ENCODE measurements at regions of chr7 and their contacts with region 1.

Region 1: DNA sequence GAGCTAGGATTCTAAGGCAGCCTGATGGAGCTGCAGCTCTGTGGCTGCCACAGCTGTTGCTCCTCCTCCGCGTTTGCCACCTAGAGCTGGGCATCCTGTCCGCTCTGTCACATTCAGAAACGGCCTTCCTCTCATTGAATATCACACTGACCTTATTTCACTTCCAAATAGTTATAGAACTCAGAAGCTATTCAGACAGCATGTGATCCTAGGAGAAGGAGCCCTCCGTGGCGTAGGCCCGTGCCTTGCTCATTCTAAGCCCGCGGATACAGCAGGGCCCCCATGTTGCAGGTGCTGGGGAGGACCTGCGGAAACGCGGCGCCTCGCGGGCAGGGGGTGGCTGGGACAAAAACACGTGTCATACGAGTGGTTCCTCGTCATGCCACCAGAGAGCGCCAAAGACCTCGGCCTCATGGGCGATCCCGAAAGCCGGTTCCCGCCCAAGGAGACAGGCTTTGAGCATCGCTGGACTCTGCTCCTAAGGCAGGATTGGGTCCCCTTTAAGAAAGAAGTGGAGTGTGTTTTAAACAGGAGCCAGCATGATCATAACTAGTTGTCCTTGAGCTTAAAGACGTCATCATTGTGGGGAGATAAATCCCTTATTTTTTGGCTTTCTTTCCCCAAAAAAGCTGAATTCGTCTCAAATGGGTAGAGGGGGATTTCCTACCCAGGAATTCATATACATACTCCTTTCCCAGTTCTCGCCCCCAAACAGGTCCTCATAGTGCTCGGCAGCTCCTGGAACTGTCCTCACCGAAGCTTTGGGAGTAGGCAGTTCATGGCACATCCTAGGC is 17.9 kb upstream of the FIGNL1 start:
- DNase-seq: peak; percentile 50
- H3K4me3 ChIP-seq: no peak overlapping the region
- H3K27ac ChIP-seq: no peak overlapping the region
- H3K4me1 ChIP-seq: no peaks in the 10 kb centered on the region
- H3K27me3 ChIP-seq: no peaks in the 10 kb centered on the region
- CTCF ChIP-seq: peak; percentile 68 to 94

Region 2: GRCh38 chr7:50206453-50207250 is 261.4 kb before region 1 on chr7:
- CTCF ChIA-PET with region 1: no interaction called
- dilution Hi-C with region 1: no loop called
- in situ Hi-C with region 1: no loop called
- intact Hi-C with region 1: loop called (anchors 1 kb)
- DNase-seq: no peak
- H3K4me3 ChIP-seq: no peak overlapping the region
- H3K27ac ChIP-seq: no peak overlapping the region
- H3K4me1 ChIP-seq: no peaks in the 10 kb centered on the region
- H3K27me3 ChIP-seq: peaks cover 2% of the 10 kb centered on the region
- CTCF ChIP-seq: no peak

Region 3: GRCh38 chr7:50418086-50418515 is 49.9 kb before region 1 on chr7:
- CTCF ChIA-PET with region 1: no interaction called
- dilution Hi-C with region 1: no loop called
- in situ Hi-C with region 1: no loop called
- intact Hi-C with region 1: no loop called
- DNase-seq: peak; percentile 71
- H3K4me3 ChIP-seq: no peak overlapping the region
- H3K27ac ChIP-seq: no peak overlapping the region
- H3K4me1 ChIP-seq: no peaks in the 10 kb centered on the region
- H3K27me3 ChIP-seq: no peaks in the 10 kb centered on the region
- CTCF ChIP-seq: peak; percentile 97 to 98

Region 4: GRCh38 chr7:50588937-50589336 is 120.9 kb after region 1 on chr7:
- CTCF ChIA-PET with region 1: no interaction called
- dilution Hi-C with region 1: no loop called
- in situ Hi-C with region 1: no loop called
- intact Hi-C with region 1: loop called (anchors 1 kb)
- DNase-seq: no peak
- H3K4me3 ChIP-seq: no peak overlapping the region
- H3K27ac ChIP-seq: no peak overlapping the region
- H3K4me1 ChIP-seq: peaks cover 13% of the 10 kb centered on the region
- H3K27me3 ChIP-seq: no peaks in the 10 kb centered on the region
- CTCF ChIP-seq: no peak

Region 5: GRCh38 chr7:50632561-50633413 is 164.8 kb after region 1 on chr7:
- CTCF ChIA-PET with region 1: interaction called, 5 read pairs
- dilution Hi-C with region 1: no loop called
- in situ Hi-C with region 1: no loop called
- intact Hi-C with region 1: loop called (anchors 1 kb)
- DNase-seq: peak; percentile 70
- H3K4me3 ChIP-seq: no peak overlapping the region
- H3K27ac ChIP-seq: no peak overlapping the region
- H3K4me1 ChIP-seq: peaks cover 3% of the 10 kb centered on the region
- H3K27me3 ChIP-seq: no peaks in the 10 kb centered on the region
- CTCF ChIP-seq: peak; percentile 92 to 94

Region 6: GRCh38 chr7:50793115-50793946 is 325.3 kb after region 1 on chr7:
- CTCF ChIA-PET with region 1: no interaction called
- dilution Hi-C with region 1: no loop called
- in situ Hi-C with region 1: no loop called
- intact Hi-C with region 1: loop called (anchors 10 kb)
- DNase-seq: no peak
- H3K4me3 ChIP-seq: peak overlapping the region in 2 of 3 experiments; percentile 37 to 53
- H3K27ac ChIP-seq: no peak overlapping the region
- H3K4me1 ChIP-seq: no peaks in the 10 kb centered on the region
- H3K27me3 ChIP-seq: peaks cover 13% of the 10 kb centered on the region
- CTCF ChIP-seq: no peak

Region 7: DNA sequence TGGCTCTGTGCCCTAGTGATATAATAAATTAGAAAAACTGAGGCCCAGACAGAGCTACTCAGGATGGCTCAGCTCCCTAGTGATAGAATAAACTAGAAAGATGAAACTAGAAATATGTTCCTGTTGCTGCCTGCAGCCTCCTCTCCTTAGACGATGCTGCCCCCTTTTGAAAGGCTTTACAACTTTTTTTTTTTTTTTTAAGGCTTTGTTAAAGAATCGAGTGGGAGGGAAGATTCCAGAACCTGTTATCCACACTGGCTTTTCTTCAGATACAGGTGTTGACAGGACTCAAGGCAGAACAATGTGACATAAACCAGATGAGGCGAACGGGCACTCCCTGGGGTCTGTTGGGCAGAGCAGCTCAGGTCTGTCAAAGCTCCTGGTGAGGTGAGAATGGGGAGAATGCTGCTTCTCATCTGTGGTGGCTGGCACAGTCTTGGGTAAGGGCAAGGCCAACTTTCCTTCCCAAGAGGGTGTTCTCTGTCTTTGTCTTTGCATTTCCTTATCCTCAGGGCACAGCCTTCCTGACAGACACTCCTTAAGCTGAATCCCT is 673.5 kb after region 1 on chr7:
- CTCF ChIA-PET with region 1: no interaction called
- dilution Hi-C with region 1: no loop called
- in situ Hi-C with region 1: loop called (anchors 10 to 25 kb)
- intact Hi-C with region 1: loop called (anchors 1 kb)
- DNase-seq: peak; percentile 48
- H3K4me3 ChIP-seq: no peak overlapping the region
- H3K27ac ChIP-seq: no peak overlapping the region
- H3K4me1 ChIP-seq: peaks cover 36% of the 10 kb centered on the region
- H3K27me3 ChIP-seq: no peaks in the 10 kb centered on the region
- CTCF ChIP-seq: peak; percentile 63 to 75

Region 8: DNA sequence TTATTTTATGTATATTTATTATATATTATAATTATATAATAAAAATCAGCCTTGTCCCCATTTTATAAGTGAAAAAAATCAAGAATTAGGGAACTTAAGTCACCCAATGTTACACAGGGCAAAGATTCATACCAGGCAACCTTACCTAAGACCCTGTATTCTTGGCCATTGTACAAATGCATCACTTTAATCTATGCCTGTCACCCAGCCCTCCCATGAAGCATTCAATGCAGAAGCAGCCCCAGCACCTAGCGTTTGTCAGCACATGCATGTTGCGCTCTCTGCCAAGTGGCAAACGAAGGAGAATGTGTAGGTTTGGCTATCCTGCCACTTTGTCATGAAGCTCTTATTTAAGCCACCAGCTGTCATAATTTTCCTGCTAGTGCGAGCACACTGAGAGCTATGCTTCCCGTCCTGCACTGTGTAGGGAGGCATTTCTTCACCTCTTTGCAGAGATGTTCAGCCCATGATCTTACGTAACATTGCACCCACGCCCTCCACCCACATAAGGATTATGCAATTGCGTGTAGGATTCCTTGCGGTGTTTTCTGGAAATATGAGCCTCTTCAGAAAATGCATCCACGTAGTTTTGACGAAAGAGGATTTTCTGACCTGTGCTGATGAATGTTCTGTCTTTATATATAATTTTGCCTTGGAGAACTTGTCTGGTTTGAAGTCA is 856.3 kb after region 1 on chr7:
- CTCF ChIA-PET with region 1: interaction called, 10 read pairs
- dilution Hi-C with region 1: no loop called
- in situ Hi-C with region 1: no loop called
- intact Hi-C with region 1: no loop called
- DNase-seq: peak; percentile 67
- H3K4me3 ChIP-seq: no peak overlapping the region
- H3K27ac ChIP-seq: no peak overlapping the region
- H3K4me1 ChIP-seq: peaks cover 14% of the 10 kb centered on the region
- H3K27me3 ChIP-seq: no peaks in the 10 kb centered on the region
- CTCF ChIP-seq: no peak